ENCODE measurements at regions of chr1 and their contacts with region 1.

Region 1: DNA sequence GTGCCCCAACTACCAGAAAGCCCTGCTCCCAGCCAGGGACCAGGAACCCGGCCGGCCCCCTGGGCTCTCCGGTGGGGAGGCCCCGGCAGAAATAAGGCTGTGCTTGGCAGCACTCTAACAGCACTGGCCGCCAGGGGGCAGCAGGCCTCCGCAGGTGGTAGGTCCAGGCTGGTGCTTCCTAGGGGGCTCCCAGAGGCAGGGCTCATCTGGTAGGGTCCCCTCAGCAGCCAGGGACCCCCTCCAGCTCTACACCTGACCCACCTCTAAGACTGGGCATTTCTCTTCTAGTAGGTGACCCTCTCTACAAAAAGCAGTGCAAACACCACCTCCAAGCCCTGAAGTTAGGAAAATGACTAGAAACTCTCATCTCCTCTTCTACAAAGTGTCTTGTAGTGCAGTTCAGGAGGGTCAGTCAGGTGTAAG is 85.6 kb downstream of the STUM start:
- DNase-seq: peak; percentile 92
- ATAC-seq: peak; percentile 78

Region 2: DNA sequence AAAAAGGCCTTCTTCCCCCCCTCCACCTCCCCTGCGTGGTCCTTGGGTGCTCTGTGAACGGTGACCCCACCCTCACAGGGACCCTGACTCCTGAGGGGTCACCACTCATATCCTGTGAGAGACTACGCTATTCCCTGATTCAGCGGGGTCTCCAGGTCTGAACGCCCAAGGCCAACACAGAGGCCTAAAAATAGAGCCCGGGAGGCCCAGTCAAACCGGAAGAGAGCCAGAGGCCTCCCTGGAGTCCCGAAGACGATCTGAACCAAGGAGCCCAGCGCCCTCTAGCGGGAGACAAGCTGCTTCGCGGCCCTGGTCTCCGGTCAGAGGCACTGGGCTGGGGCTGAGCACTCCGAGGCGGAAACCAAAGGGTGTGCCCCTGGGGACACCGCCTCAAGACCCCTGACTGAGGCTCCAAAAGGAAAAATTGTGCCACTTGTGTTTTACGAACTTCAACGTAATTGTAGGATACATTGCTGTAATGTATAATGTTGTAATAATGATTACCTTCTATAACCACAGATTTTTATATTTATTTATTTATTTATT is 193.9 kb after region 1 on chr1:
- intact Hi-C with region 1: loop called (anchors 5 kb)
- DNase-seq: peak; percentile 98
- ATAC-seq: peak; percentile 97

Region 3: DNA sequence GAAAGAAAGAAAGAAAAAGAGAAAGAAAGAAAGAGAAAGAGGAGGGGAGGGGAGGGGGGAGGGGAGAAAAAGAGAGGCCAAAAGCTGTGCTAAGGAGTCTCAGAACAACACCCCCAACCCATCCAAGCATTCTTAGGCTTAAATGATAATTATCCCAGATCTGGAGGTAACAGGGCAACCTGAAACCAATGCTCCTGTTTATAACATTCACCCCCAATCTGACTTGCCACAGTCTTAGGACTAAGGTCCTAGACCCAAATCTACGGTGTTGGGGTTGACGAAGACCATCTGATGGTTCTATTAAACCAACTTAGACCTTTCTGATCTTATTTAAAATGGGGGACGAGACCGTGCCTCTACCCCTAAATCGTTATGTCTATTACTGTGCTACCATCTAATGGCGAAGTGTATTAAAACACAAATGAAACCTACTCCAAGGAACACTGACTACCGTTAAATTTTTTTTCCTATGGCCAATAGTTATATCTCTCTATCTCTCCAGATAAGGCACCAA is 803.4 kb after region 1 on chr1:
- intact Hi-C with region 1: loop called (anchors 10 kb)
- DNase-seq: no peak
- ATAC-seq: peak; percentile 85

Measured in sciatic nerve (tissue), 2 donors.